Upper lobe of right lung (tissue), 1 donor: ENCODE measurements at regions of chr15 and their contacts with region 1.

Region 1: GRCh38 chr15:81569286-81570080 is 195.5 kb upstream of the TMC3 start:
- DNase-seq: no peak
- ATAC-seq: no peak
- H3K4me3 ChIP-seq: no peak overlapping the region
- H3K27ac ChIP-seq: no peak overlapping the region
- H3K4me1 ChIP-seq: no peaks in the 10 kb centered on the region
- H3K27me3 ChIP-seq: no peaks in the 10 kb centered on the region
- CTCF ChIP-seq: no peak

Region 2: DNA sequence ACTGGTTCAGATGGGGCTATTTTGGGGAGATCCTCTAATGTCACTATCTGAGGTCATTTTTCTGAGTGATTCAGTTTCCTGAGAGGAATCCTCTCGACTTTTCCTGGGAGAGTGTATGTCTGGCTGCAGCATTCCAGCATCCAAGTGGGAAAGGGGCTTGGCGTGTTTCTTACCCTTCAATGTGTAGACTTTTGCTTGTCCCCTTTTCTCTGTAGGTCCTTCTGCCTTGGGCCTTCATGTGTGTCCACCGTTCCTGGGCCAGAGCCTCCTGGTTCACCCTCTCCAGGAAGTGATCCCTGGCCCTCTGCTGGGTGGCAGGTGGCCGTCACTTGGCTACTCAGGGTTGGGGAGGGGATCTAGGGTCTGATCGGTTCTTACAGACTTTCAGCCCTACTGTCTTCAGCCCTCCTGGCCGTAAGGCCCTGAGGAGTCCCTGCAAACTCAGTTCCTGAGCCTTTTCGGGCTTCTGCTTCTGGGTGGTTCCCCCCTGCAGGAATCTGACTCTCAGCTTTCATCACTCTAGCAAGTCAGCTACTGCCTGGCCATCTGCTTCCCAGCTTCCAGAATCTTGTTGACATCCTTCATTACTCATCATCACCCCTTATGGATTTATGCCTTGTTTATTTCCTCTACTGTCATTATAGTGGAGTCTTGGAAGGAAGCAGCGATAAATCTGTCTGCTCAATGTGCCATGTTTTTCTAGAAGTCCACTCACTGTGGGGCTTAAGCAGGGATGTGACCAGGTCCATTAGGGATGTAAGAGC is 743.3 kb after region 1 on chr15:
- intact Hi-C with region 1: loop called (anchors 10 kb)
- DNase-seq: peak; percentile 45
- ATAC-seq: no peak
- H3K4me3 ChIP-seq: no peak overlapping the region
- H3K27ac ChIP-seq: no peak overlapping the region
- H3K4me1 ChIP-seq: no peaks in the 10 kb centered on the region
- H3K27me3 ChIP-seq: no peaks in the 10 kb centered on the region
- CTCF ChIP-seq: no peak